PC-3 (cell line): ENCODE measurements at regions of chr9 and their contacts with region 1.

Region 1: DNA sequence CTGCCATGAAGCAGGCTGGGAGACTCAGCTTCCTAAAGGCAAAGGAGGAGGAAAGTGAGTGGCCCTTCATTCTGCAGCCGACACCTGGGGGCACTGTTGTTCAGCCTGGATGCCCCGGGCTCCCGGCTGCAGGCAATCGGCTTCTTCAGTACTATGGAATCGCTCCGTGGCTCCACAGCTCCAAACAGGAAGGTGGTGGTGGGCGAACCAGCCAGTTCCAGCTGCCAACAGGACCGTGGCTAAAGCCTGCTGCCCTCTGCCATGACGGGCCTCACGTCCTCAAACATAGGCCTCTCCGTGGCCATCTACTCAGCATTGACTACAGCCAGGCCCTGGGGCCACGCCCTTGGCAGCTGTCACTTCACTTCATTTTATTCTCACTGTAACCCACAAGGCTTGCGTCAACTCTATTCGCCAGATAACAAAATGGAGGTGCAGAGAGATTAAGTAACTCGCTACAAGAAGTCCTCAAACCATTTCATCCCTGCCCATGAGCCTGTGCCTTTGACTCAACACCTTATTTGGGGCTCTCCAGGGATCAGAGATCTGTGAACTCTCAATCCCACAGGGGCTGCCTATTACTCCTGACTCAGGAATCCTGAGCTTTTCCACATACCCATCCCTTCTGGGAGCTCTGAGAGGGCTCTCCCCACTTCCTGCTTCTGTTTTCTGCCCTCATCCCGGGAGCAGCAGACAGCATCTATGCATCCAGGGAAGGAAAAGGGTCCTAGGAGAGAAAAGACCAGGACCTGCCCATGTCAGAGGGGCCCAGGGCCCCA is 38.0 kb downstream of the PAX5 start:
- DNase-seq: peak; percentile 69
- ATAC-seq: peak; percentile 83
- H3K4me3 ChIP-seq: peak overlapping the region; percentile 56
- H3K27ac ChIP-seq: no peak overlapping the region
- H3K4me1 ChIP-seq: peaks cover 13% of the 10 kb centered on the region
- H3K27me3 ChIP-seq: no peaks in the 10 kb centered on the region
- CTCF ChIP-seq: peak; percentile 75

Region 2: DNA sequence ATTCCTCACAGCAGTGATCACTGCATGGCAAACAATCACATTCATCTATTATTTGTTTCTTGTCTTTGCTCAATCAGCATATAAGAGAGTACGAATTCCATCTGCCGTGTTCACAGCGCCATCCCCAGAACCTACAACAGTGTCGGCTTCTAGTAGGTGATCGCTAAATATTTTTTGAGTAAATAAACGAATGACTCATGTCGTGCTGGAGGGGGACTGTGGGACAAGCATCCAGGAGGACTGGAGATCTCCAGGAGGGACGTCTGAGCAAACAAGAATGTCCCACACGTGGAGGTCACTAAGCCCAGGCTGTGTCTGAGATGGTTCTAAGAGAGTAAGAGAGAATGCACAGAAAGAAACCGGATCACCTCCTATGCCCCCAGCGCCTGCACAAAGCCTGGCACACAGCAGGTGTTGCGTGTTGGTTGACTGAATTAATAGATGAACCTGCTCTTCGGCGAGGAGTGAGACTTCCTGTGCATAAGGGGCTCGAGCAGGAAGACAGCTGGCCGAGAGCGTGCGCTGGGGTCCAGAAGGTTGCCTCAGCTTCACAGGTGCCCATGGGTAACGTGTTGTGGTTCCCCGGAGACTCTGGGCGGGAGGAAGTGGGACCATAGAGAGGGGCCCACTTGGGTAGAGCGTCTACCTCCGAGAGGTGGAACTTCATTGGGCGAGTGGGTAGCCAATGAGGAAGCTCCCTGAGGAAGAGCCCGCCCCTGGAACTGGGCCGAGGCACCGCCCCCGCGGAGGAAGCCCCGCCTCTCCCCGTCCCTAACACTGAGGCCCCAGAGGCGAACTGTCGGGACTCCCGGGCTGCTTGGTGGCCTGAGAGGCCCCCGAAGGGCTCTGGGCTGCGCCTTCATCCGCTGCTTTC is 230.4 kb before region 1 on chr9:
- CTCF ChIA-PET with region 1: no interaction called
- POLR2A ChIA-PET with region 1: no interaction called
- intact Hi-C with region 1: no loop called
- DNase-seq: no peak
- ATAC-seq: no peak
- H3K4me3 ChIP-seq: no peak overlapping the region
- H3K27ac ChIP-seq: no peak overlapping the region
- H3K4me1 ChIP-seq: no peaks in the 10 kb centered on the region
- H3K27me3 ChIP-seq: peaks cover 22% of the 10 kb centered on the region
- CTCF ChIP-seq: no peak

Region 3: GRCh38 chr9:36873247-36873875 is 122.8 kb before region 1 on chr9:
- CTCF ChIA-PET with region 1: no interaction called
- POLR2A ChIA-PET with region 1: no interaction called
- intact Hi-C with region 1: loop called (anchors 1 kb)
- DNase-seq: peak; percentile 66
- ATAC-seq: peak; percentile 89
- H3K4me3 ChIP-seq: no peak overlapping the region
- H3K27ac ChIP-seq: no peak overlapping the region
- H3K4me1 ChIP-seq: no peaks in the 10 kb centered on the region
- H3K27me3 ChIP-seq: peaks cover 6% of the 10 kb centered on the region; the same call in 1 of the 2 replicates
- CTCF ChIP-seq: peak; percentile 87

Region 4: DNA sequence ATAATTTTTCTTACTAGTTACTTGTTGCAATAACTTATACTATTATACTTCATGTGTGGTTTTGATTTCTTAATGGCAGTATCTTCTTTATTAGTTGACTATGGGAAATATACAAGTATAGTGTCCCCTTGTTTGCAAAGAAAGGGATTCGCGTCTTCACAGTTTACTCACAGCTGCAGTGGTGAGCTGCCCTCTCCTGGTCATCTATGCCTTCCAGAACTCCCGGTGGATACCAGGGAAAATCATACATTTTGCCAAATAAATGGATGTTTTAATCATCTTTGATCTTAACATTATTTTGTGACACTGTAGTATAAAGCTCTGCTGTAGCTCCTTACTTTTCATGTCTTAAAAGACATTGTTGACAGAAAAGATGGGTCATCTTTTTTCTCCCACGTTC is 266.3 kb after region 1 on chr9:
- CTCF ChIA-PET with region 1: no interaction called
- POLR2A ChIA-PET with region 1: no interaction called
- intact Hi-C with region 1: loop called (anchors 5 kb)
- DNase-seq: peak; percentile 39
- ATAC-seq: 0 out of 2 replicates have a peak, but pooled peaks have one; percentile 31
- H3K4me3 ChIP-seq: no peak overlapping the region
- H3K27ac ChIP-seq: no peak overlapping the region
- H3K4me1 ChIP-seq: no peaks in the 10 kb centered on the region
- H3K27me3 ChIP-seq: no peaks in the 10 kb centered on the region
- CTCF ChIP-seq: peak; percentile 72

Region 5: GRCh38 chr9:37329576-37329975 is 333.5 kb after region 1 on chr9:
- CTCF ChIA-PET with region 1: no interaction called
- POLR2A ChIA-PET with region 1: no interaction called
- intact Hi-C with region 1: loop called (anchors 1 kb)
- DNase-seq: peak; percentile 32
- ATAC-seq: 0 out of 2 replicates have a peak, but pooled peaks have one; percentile 24
- H3K4me3 ChIP-seq: no peak overlapping the region
- H3K27ac ChIP-seq: no peak overlapping the region
- H3K4me1 ChIP-seq: no peaks in the 10 kb centered on the region
- H3K27me3 ChIP-seq: no peaks in the 10 kb centered on the region
- CTCF ChIP-seq: peak; percentile 50